PC-9 (cell line): ENCODE measurements at regions of chr9 and their contacts with region 1.

Region 1: GRCh38 chr9:124309665-124310064 is 51.9 kb downstream of the NEK6 start:
- DNase-seq: peak; percentile 92 to 96
- H3K4me3 ChIP-seq: no peak overlapping the region
- H3K27ac ChIP-seq: peak overlapping the region; percentile 13; the same call in 1 of the 2 replicates
- H3K4me1 ChIP-seq: peaks cover 37% of the 10 kb centered on the region
- H3K27me3 ChIP-seq: no peaks in the 10 kb centered on the region
- CTCF ChIP-seq: no peak

Region 2: GRCh38 chr9:123929870-123930831 is 379.5 kb before region 1 on chr9 and contains the start of gene DENND1A:
- CTCF ChIA-PET with region 1: no interaction called
- POLR2A ChIA-PET with region 1: no interaction called
- intact Hi-C with region 1: loop called (anchors 5 kb)
- DNase-seq: peak; percentile 58 to 92
- H3K4me3 ChIP-seq: peak within 1 kb of the TSS; percentile 85
- H3K27ac ChIP-seq: peak within 1 kb of the TSS; percentile 75
- H3K4me1 ChIP-seq: peaks cover 64% of the 10 kb centered on the region
- H3K27me3 ChIP-seq: no peaks in the 10 kb centered on the region
- CTCF ChIP-seq: no peak
- total RNA-seq, gene DENND1A: 26.8 and 37.7 TPM in 2 replicates

Region 3: DNA sequence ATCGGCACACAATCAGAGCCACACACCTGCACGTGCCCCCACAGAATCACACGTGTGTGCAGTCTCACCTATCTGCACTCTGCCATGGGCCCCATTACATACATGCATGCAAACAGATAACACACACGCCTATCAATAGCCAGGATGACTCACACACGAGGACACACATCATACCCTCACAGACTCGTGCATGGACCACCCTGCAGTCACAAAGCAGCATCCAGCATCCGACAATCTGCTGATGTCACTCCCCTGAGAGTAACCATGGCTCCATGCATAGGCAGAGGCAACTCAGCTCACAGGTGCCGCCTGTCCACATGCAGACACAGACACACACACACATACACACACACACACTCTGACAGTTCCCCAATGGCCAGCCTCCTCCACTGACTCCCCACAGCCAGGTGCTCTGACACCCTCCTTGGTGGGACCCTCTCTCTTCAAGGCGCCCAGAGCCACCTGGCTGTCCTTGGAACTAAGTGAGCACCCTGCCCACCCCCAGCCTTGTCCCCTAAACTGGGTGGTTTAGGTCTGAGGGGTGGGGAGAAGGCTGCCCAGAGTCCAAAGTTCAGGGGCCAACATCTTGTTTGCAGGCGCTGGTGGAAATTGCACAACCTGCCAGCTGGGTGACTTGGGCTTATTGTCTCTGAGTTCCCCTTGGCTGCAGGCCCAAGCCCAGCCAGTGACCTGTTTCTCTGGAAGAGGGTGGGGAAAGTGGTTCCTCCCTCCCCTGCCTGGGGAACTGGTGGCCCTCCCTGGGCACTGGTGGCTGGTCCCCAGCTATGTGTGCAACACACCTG is 86.5 kb before region 1 on chr9:
- CTCF ChIA-PET with region 1: no interaction called
- POLR2A ChIA-PET with region 1: no interaction called
- intact Hi-C with region 1: loop called (anchors 5 kb)
- DNase-seq: peak; percentile 81 to 87
- H3K4me3 ChIP-seq: no peak overlapping the region
- H3K27ac ChIP-seq: no peak overlapping the region
- H3K4me1 ChIP-seq: peaks cover 46% of the 10 kb centered on the region
- H3K27me3 ChIP-seq: no peaks in the 10 kb centered on the region
- CTCF ChIP-seq: no peak

Region 4: DNA sequence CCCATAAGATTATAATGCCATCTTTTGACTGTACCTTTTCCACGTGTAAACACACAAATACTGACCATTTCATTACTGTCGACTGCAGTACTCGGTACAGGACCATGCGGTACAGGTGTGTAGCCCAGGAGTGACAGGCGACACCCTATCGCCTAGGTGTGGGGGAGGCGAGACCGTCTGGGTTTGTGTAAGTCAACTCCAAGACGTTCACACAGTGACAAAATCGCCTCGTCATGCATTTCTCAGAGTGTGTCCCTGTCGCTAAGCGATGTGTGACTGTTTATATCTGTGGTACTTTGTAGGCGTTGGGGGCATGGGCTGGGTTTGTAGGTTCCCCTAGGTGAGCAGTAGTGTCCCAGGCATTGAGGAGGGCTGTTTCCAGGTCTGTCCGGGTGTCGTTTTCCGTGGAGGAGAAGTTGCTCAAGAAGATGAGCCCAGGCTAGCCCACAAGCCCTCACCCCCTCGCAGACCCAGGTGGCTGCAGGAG is 31.6 kb before region 1 on chr9:
- CTCF ChIA-PET with region 1: no interaction called
- POLR2A ChIA-PET with region 1: no interaction called
- intact Hi-C with region 1: loop called (anchors 2 kb)
- DNase-seq: peak in 1 of 2 experiments; percentile 27
- H3K4me3 ChIP-seq: no peak overlapping the region
- H3K27ac ChIP-seq: no peak overlapping the region
- H3K4me1 ChIP-seq: no peaks in the 10 kb centered on the region
- H3K27me3 ChIP-seq: no peaks in the 10 kb centered on the region
- CTCF ChIP-seq: no peak

Region 5: DNA sequence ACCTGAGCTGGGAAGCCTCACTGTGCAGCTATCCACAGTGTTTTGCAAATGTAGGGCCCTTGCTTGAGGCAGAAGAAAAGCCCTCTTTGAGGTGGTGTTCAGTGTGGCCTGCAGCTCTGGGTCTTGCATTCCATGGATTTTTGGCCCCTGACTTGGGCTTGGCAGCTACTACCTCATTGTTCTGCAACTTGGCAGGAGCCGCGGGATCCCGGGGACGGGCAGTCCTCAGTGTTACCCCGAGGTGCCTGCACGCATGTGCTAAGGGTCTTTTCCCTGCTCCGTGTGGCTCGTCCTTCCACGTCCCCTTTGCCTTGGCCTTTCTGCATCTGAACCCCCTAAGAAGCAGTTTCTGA is 12.1 kb before region 1 on chr9:
- CTCF ChIA-PET with region 1: no interaction called
- POLR2A ChIA-PET with region 1: interaction called, 9 read pairs
- intact Hi-C with region 1: loop called (anchors 1 kb)
- DNase-seq: peak; percentile 92 to 94
- H3K4me3 ChIP-seq: no peak overlapping the region
- H3K27ac ChIP-seq: 0 out of 2 replicates have a peak overlapping the region, but pooled peaks have one; percentile 6
- H3K4me1 ChIP-seq: peaks cover 66% of the 10 kb centered on the region
- H3K27me3 ChIP-seq: no peaks in the 10 kb centered on the region
- CTCF ChIP-seq: no peak

Region 6: DNA sequence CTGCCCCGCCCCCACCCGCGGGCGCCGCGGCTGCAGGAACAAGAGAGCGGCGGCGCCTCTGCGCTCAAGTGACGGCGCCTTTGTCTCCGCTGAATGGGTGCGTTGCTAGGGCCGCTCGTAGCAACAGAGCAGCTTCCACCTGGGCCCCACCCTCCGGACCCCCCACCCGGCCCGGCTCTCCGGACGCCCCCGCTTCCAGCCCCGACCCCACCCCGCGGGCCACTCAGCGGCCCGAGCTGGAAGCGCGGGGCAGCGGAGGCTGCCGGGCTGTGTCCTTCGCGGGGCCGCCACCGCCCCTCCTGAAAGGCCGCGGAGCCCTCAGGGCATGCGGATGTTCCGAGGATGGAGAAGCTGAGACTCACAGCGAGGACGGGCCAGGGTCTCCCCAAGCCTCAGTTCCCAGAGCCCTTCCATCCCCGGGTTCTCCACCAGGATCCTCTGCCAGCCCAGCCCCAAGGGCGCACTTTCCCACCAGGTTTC is 168.2 kb after region 1 on chr9:
- CTCF ChIA-PET with region 1: no interaction called
- POLR2A ChIA-PET with region 1: no interaction called
- intact Hi-C with region 1: no loop called
- DNase-seq: no peak
- H3K4me3 ChIP-seq: no peak overlapping the region
- H3K27ac ChIP-seq: no peak overlapping the region
- H3K4me1 ChIP-seq: no peaks in the 10 kb centered on the region
- H3K27me3 ChIP-seq: peaks cover 8% of the 10 kb centered on the region; the same call in 1 of the 2 replicates
- CTCF ChIP-seq: no peak